Ovary (tissue), 10 donors: ENCODE measurements at regions of chr17 and their contacts with region 1.

Region 1: GRCh38 chr17:63881876-63882601 is at the start of gene GH2:
- DNase-seq: peak in 4 of 5 donors; percentile 25 to 58 (median 44)
- H3K4me3 ChIP-seq: no peak within 1 kb of the TSS
- H3K27ac ChIP-seq: no peak within 1 kb of the TSS
- H3K4me1 ChIP-seq: no peaks in the 10 kb centered on the region
- H3K27me3 ChIP-seq: no peaks in the 10 kb centered on the region
- CTCF ChIP-seq: peak in 2 of 3 donors; percentile 8 to 43
- EP300 ChIP-seq: no peak
- POLR2A ChIP-seq: no peak
- total RNA-seq, gene GH2: not detected

Region 2: DNA sequence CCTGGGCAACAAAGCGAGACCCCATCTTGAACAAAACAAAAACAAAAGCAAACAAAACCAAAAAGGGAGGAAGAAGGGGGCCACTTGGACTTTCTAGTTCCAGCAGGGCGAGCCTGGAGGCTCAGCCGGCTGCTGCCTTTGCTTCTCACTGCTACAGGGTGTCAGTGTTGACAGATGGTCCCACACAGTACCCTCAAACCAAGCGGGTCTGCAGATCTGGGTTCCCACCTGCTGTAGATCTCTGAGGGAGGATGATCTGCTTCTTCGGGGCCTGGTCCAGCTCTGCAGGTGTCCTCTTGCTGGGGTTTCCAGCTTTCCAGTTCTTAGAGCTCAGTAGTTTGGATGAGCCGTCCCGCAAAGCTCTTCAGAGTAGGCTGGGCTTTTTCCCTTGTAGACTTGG is 22.3 kb after region 1 on chr17:
- intact Hi-C with region 1: loop called in 1 of 4 experiments (anchors 2 kb)
- DNase-seq: no peak
- H3K4me3 ChIP-seq: no peak overlapping the region
- H3K27ac ChIP-seq: no peak overlapping the region
- H3K4me1 ChIP-seq: no peaks in the 10 kb centered on the region
- H3K27me3 ChIP-seq: no peaks in the 10 kb centered on the region
- CTCF ChIP-seq: no peak
- EP300 ChIP-seq: no peak
- POLR2A ChIP-seq: no peak

Region 3: GRCh38 chr17:63931099-63931561 is 49.1 kb after region 1 on chr17:
- intact Hi-C with region 1: no loop called
- DNase-seq: peak in 2 of 5 donors; percentile 42 to 58
- H3K4me3 ChIP-seq: no peak overlapping the region
- H3K27ac ChIP-seq: no peak overlapping the region
- H3K4me1 ChIP-seq: no peaks in the 10 kb centered on the region
- H3K27me3 ChIP-seq: no peaks in the 10 kb centered on the region
- CTCF ChIP-seq: no peak
- EP300 ChIP-seq: no peak
- POLR2A ChIP-seq: no peak

Region 4: DNA sequence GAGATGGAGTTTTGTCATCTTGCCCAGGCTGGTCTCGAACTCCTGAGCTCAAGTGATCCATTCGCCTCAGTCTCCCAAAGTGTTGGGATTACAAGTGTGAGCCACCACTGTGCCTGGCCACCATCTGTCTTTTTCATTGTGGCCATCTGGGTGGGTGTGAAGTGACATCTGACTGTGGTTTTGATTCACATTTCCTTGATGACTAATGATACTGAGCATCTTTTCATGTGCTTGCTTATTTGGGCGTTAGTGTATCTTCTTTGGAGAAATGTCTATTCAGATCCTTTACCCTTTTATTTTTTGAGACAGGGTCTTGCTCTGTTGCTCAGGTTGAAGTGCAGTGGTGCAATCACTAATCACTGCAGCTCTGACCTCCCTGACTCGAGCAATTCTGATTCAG is 301.8 kb after region 1 on chr17:
- intact Hi-C with region 1: no loop called
- DNase-seq: no peak
- H3K4me3 ChIP-seq: no peak overlapping the region
- H3K27ac ChIP-seq: no peak overlapping the region
- H3K4me1 ChIP-seq: no peaks in the 10 kb centered on the region
- H3K27me3 ChIP-seq: no peaks in the 10 kb centered on the region
- CTCF ChIP-seq: no peak
- EP300 ChIP-seq: no peak
- POLR2A ChIP-seq: no peak